GM10248 (cell line): ENCODE measurements at regions of chr3 and their contacts with region 1.

Region 1: DNA sequence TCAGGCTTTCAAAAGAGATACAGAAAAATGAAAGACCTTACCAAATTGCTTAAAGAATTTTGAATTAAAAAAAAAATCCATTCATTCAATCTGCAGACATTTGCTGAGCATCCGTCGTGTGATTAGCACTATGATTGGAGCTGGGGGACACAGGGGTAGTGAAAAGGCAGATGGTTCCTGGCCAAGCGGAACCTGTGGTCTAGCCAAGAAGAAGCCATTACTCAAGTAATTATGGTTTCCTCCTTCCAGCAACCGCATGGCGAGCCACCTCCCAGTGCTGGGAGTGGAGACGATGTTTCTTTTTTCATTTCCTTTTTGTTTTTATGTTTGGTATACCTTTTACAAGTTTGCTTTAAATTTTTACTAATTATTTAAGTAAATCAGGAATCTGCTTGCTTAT is 140.2 kb downstream of the CACNA2D3 start:
- DNase-seq: no peak
- CTCF ChIP-seq: no peak

Region 2: GRCh38 chr3:53949541-53949940 is 313.0 kb before region 1 on chr3:
- CTCF ChIA-PET with region 1: no interaction called
- POLR2A ChIA-PET with region 1: no interaction called
- DNase-seq: no peak
- CTCF ChIP-seq: no peak

Region 3: GRCh38 chr3:54008104-54008503 is 254.4 kb before region 1 on chr3:
- CTCF ChIA-PET with region 1: no interaction called
- POLR2A ChIA-PET with region 1: no interaction called
- DNase-seq: no peak
- CTCF ChIP-seq: no peak

Region 4: DNA sequence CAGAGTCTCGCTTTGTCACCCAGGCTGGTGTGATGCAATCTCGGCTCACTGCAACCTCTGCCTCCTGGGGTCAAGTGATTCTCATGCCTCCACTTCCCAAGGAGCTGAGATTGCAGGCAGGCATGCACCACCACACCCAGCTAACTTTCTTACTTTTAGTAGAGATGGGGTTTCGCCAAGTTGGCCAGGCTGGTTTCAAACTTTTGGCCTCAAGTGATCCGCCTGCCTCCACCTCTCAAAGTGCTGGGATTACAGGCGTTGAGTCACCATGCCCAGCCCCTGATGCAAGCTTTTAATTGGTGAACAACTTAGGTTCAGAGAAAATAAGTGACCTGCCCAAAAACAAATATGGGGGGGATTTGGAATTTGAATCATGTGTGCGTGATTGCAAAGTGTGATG is 419.2 kb after region 1 on chr3:
- CTCF ChIA-PET with region 1: no interaction called
- POLR2A ChIA-PET with region 1: no interaction called
- DNase-seq: no peak
- CTCF ChIP-seq: no peak

Region 5: DNA sequence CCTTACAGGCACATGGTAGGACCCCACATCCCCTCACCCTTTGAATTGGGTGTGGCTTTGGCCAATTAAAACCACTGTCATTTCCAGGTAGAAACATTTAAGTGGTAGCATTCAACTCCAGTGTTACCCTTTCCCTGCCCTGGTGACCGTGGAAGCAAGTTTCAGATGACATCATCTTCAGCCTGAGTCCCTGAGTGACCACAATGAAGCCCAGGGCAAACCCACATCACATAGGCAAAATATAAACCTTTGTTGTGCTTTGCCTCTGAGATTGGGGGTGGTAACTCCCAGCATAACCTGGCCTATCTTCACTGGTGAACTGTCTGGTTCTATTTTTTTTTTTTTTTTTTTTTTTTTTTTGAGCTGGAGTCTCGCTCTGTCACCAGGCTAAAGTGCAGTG is 1628.6 kb after region 1 on chr3:
- CTCF ChIA-PET with region 1: no interaction called
- POLR2A ChIA-PET with region 1: interaction called, 10 read pairs
- DNase-seq: no peak
- CTCF ChIP-seq: no peak